ENCODE measurements at regions of chr2 and their contacts with region 1.

Region 1: GRCh38 chr2:74458132-74458925 is at the start of gene WBP1:
- DNase-seq: peak; percentile 100
- H3K4me3 Mint-ChIP-seq: peak within 1 kb of the TSS; percentile 88
- H3K27ac Mint-ChIP-seq: peak within 1 kb of the TSS; percentile 95
- H3K4me1 Mint-ChIP-seq: peaks cover 60% of the 10 kb centered on the region
- H3K27me3 Mint-ChIP-seq: no peaks in the 10 kb centered on the region
- total RNA-seq, gene WBP1: 58.3 to 60.4 TPM

Region 2: GRCh38 chr2:74357627-74358026 is 100.7 kb before region 1 on chr2:
- CTCF ChIA-PET with region 1: no interaction called
- POLR2A ChIA-PET with region 1: no interaction called
- DNase-seq: no peak
- H3K4me3 Mint-ChIP-seq: no peak overlapping the region
- H3K27ac Mint-ChIP-seq: no peak overlapping the region
- H3K4me1 Mint-ChIP-seq: no peaks in the 10 kb centered on the region
- H3K27me3 Mint-ChIP-seq: no peaks in the 10 kb centered on the region

Region 3: DNA sequence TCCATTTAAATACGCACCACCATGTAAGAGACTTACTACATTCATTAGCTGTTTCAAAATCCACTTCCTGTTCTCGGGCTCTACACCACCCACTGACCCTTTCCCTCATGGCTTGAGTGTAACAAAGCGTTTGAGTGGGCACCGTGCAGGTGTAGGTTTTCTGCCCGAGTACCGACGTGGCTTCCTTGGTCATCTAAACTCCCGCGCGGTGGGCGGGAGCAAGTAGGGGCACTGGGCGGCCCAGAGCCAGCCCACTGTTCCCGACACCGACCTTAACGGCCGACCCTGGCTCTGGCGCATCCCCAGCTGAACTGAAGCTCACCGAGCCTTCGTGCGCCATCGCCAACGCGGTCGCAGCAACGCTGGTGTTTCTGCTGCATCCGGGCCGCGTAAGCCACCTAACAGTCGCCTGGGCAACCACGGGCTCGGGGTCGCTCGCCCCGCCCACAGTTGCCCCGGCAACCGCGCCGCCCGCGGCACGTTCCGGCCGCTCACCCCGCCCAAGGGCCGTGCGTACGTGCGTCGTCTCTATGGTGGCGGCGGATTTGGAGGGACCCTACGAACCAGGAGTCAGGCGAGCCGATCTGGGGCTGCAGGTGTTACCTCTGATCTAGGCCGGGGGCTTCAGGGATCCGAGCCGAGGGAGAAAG is 37.0 kb before region 1 on chr2 and contains the starts of genes C2orf81 and WDR54:
- CTCF ChIA-PET with region 1: interaction called, 23 read pairs
- POLR2A ChIA-PET with region 1: interaction called, 31 read pairs
- DNase-seq: peak; percentile 96
- H3K4me3 Mint-ChIP-seq: peak within 1 kb of the TSS; percentile 94
- H3K27ac Mint-ChIP-seq: peak within 1 kb of the TSS; percentile 95
- H3K4me1 Mint-ChIP-seq: peaks cover 29% of the 10 kb centered on the region
- H3K27me3 Mint-ChIP-seq: peaks cover 10% of the 10 kb centered on the region
- total RNA-seq, gene C2orf81: 1.2 to 1.6 TPM
- total RNA-seq, gene WDR54: 102 to 105 TPM

Region 4: GRCh38 chr2:74472086-74472944 is 14.0 kb after region 1 on chr2 and contains the start of gene MRPL53:
- CTCF ChIA-PET with region 1: interaction called, 14 read pairs
- POLR2A ChIA-PET with region 1: interaction called, 65 read pairs
- DNase-seq: peak; percentile 97
- H3K4me3 Mint-ChIP-seq: peak within 1 kb of the TSS; percentile 97
- H3K27ac Mint-ChIP-seq: peak within 1 kb of the TSS; percentile 98
- H3K4me1 Mint-ChIP-seq: peaks cover 36% of the 10 kb centered on the region
- H3K27me3 Mint-ChIP-seq: no peaks in the 10 kb centered on the region
- total RNA-seq, gene MRPL53: 115 to 126 TPM

Region 5: GRCh38 chr2:74507145-74507925 is 49.0 kb after region 1 on chr2 and contains the start of gene PCGF1:
- CTCF ChIA-PET with region 1: no interaction called
- POLR2A ChIA-PET with region 1: interaction called, 10 read pairs
- DNase-seq: peak; percentile 98
- H3K4me3 Mint-ChIP-seq: peak within 1 kb of the TSS; percentile 97
- H3K27ac Mint-ChIP-seq: peak within 1 kb of the TSS; percentile 99
- H3K4me1 Mint-ChIP-seq: peaks cover 69% of the 10 kb centered on the region
- H3K27me3 Mint-ChIP-seq: peaks cover 29% of the 10 kb centered on the region
- total RNA-seq, gene PCGF1: 23.0 to 31.4 TPM

Region 6: GRCh38 chr2:74538881-74539339 is 80.6 kb after region 1 on chr2:
- CTCF ChIA-PET with region 1: no interaction called
- POLR2A ChIA-PET with region 1: no interaction called
- DNase-seq: no peak
- H3K4me3 Mint-ChIP-seq: no peak overlapping the region
- H3K27ac Mint-ChIP-seq: no peak overlapping the region
- H3K4me1 Mint-ChIP-seq: peaks cover 12% of the 10 kb centered on the region
- H3K27me3 Mint-ChIP-seq: peaks cover 35% of the 10 kb centered on the region

Measured in activated CD4-positive, alpha-beta memory T cell treated with anti-CD3 and anti-CD28 coated beads, Interleukin-2, amount 10 ng/mL, durations not matched to agents 7 days and 5 days (primary cell).